ENCODE measurements at regions of chr13 and their contacts with region 1.

Region 1: GRCh38 chr13:113393563-113394338 is 29.8 kb upstream of the GRTP1 start:
- DNase-seq: peak; percentile 66 to 97 (median 81)
- ATAC-seq: peak; percentile 97
- H3K4me3 ChIP-seq: peak overlapping the region; percentile 50 to 66
- H3K27ac ChIP-seq: peak overlapping the region in 1 of 2 donors; percentile 16
- H3K4me1 ChIP-seq: peaks cover 3 to 12% of the 10 kb centered on the region in 2 donors
- H3K27me3 ChIP-seq: no peaks in the 10 kb centered on the region
- CTCF ChIP-seq: peak; percentile 91 to 96

Region 2: DNA sequence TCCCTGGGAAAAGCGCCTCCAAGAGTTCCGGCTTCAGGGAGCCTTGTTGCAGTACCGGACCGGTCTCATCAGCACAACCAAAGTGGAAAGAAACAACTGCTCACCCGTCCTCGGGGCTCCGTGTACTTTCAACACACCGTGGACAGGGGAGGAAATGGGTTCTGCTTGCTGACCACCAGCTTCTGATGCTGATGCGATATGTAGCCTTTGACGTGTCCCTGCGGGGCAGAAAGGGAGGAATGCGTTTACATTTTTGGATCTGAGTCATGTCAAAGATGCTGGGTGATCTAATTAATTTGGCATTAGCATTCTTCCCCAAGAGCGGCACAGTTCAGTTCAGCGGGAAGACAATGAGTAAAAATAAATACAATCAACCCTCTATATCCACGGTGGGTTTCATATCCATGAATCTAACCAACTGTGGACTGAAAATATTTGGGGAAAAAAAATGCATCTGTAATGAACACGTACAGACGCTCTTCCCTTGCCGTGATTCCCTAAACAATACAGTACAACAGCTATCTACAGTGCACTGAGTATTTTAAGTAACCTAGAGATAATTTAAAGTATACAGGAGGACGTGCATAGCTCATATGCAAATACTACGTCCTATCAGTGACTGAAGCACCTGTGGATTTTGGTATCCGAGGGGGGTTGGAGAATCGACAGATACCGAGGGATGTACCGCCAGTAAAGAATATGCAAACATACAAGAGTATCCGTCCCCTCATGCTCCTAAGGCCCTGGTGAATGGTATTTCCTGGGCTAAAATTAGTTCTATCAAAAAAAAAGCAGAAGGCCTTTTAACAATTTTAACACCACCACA is 215.5 kb before region 1 on chr13:
- intact Hi-C with region 1: no loop called
- DNase-seq: no peak
- ATAC-seq: no peak
- H3K4me3 ChIP-seq: no peak overlapping the region
- H3K27ac ChIP-seq: no peak overlapping the region
- H3K4me1 ChIP-seq: no peaks in the 10 kb centered on the region
- H3K27me3 ChIP-seq: no peaks in the 10 kb centered on the region
- CTCF ChIP-seq: no peak

Region 3: GRCh38 chr13:113275387-113275786 is 118.4 kb before region 1 on chr13:
- intact Hi-C with region 1: loop called in 1 of 2 experiments (anchors 10 kb)
- DNase-seq: peak in 1 of 4 donors; percentile 35
- ATAC-seq: peak; percentile 54
- H3K4me3 ChIP-seq: no peak overlapping the region
- H3K27ac ChIP-seq: peak overlapping the region in 1 of 2 donors; percentile 77
- H3K4me1 ChIP-seq: peaks cover 4 to 45% of the 10 kb centered on the region in 2 donors
- H3K27me3 ChIP-seq: no peaks in the 10 kb centered on the region
- CTCF ChIP-seq: peak; percentile 31 to 39

Measured in left lung (tissue), 14 donors.